ENCODE measurements at regions of chr6 and their contacts with region 1.

Region 1: DNA sequence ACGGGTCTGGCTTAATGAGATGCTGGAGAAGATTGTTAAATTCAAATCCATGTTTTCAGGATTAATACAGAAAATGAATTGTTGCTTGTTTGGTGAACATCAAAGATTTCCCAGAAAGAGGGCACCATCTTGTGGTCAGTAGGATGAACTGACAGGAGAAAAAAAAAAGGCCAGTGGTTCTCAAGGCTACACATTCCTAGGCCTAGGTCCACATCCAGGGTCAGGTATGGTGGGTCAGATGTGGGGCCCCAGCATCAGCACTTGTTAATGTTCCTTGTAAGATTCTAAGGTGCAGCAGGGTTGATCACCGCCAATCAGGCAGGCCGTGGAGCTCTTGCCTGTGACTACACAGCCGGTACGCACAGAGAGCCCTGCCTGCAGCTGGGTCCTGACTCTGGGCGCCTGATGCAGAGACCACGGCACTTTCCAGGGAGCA is 34.0 kb upstream of the FOXO3 start:
- DNase-seq: no peak
- H3K4me3 ChIP-seq: no peak overlapping the region
- H3K27ac ChIP-seq: no peak overlapping the region
- H3K4me1 ChIP-seq: no peaks in the 10 kb centered on the region
- H3K27me3 ChIP-seq: no peaks in the 10 kb centered on the region
- CTCF ChIP-seq: peak; percentile 50 to 87 (median 68)
- POLR2A ChIP-seq: no peak

Region 2: DNA sequence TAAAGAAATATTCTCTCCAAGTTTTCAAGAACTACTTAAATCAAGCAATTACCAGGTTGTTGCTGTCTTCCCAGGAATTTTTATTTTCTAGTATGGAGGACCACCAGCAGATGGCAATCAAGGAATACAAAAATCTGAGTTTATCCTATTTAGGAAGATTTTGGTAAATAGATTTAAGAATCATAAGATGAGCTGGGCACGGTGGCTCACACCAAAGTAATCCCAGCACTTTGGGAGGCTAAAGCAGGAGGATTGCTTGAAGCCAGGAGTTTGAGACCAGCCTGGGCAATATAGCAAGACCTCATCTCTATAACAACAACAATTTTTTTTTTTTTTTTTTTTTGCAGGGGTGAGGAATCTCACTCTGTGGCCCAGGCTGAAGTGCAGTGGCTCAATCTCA is 549.5 kb before region 1 on chr6:
- intact Hi-C with region 1: loop called (anchors 10 kb)
- DNase-seq: no peak
- H3K4me3 ChIP-seq: no peak overlapping the region
- H3K27ac ChIP-seq: no peak overlapping the region
- H3K4me1 ChIP-seq: peaks cover 0 to 11% (median 4%) of the 10 kb centered on the region in 3 donors
- H3K27me3 ChIP-seq: no peaks in the 10 kb centered on the region
- CTCF ChIP-seq: peak in 4 of 6 experiments; percentile 23 to 41 (median 26)
- POLR2A ChIP-seq: no peak

Region 3: GRCh38 chr6:108348655-108349349 is 178.0 kb before region 1 on chr6:
- intact Hi-C with region 1: no loop called
- DNase-seq: no peak
- H3K4me3 ChIP-seq: no peak overlapping the region
- H3K27ac ChIP-seq: no peak overlapping the region
- H3K4me1 ChIP-seq: no peaks in the 10 kb centered on the region
- H3K27me3 ChIP-seq: no peaks in the 10 kb centered on the region
- CTCF ChIP-seq: no peak
- POLR2A ChIP-seq: no peak

Region 4: GRCh38 chr6:108627692-108628550 is 101.2 kb after region 1 on chr6:
- intact Hi-C with region 1: no loop called
- DNase-seq: no peak
- H3K4me3 ChIP-seq: no peak overlapping the region
- H3K27ac ChIP-seq: peak overlapping the region in 1 of 4 donors; percentile 4
- H3K4me1 ChIP-seq: peaks cover 9 to 93% (median 41%) of the 10 kb centered on the region in 3 donors
- H3K27me3 ChIP-seq: no peaks in the 10 kb centered on the region
- CTCF ChIP-seq: no peak
- POLR2A ChIP-seq: no peak